A673 (cell line): ENCODE measurements at regions of chr1 and their contacts with region 1.

Region 1: DNA sequence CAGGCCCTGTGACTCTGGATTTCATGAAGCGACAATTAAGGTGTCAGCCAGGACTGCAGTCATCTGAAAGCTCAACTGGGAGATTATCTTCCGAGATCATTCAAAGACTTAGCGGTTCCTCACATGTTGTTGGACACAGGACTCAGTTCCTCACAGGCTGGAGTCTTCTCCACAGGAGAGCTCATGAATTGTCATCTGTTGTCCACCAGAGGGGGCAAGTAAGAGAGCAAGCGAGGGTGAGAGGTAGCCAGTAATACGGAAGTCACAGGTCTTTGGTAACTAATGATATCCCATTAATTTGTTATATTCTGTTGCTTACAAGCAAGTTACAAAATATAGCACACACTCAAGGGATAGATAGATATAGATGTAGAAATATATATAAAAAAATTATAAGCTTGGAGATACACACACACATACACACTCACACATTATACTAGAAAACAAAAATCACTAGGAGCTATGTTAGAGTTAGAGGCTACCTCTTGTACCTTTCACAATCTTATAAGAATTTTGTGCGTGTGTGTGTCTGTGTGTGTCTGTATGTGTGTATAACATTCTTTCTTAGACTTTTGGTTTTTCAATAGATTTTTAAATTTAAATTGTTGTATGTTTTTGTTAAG is 1695.3 kb downstream of the BRINP3 start:
- DNase-seq: peak; percentile 73
- H3K4me3 ChIP-seq: no peak overlapping the region
- H3K27ac ChIP-seq: no peak overlapping the region
- H3K4me1 ChIP-seq: no peaks in the 10 kb centered on the region
- H3K27me3 ChIP-seq: no peaks in the 10 kb centered on the region
- CTCF ChIP-seq: peak; percentile 67

Region 2: DNA sequence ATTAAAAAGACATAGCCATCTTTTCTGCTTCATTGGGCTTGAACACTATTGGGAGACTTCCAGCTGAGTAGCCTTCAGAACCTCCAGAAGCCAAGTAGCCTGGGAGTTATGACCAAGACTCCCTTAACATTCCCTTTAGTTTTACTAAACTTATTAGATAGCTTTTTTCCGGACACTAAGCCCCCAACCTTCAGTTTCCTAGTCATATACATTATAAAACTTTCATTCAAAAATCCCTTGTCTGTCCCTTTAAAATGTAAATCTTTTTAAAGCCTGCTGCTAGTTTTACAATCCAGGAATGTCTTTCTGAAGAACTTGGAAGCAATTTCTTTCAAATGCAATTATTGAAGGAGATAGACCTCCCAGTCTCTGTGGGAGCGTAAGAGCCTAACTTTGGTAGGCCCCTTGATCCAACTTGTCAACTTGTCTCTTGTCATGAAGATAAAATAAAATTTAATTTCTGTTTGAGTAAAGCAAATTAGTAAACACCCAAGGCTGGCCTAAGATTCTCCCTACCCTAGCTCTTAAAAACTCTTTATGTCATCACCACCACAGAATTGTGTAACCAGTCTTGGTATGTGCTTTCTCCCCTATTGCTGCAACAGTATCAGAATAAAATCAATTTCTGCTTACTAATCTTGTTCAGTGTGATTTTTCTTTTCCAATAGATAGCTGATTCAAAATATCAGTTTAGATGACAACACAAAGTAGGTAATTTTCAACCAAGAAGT is 1157.4 kb before region 1 on chr1:
- CTCF ChIA-PET with region 1: no interaction called
- POLR2A ChIA-PET with region 1: no interaction called
- intact Hi-C with region 1: no loop called
- DNase-seq: no peak
- H3K4me3 ChIP-seq: no peak overlapping the region
- H3K27ac ChIP-seq: no peak overlapping the region
- H3K4me1 ChIP-seq: peaks cover 5% of the 10 kb centered on the region
- H3K27me3 ChIP-seq: no peaks in the 10 kb centered on the region
- CTCF ChIP-seq: no peak

Region 3: GRCh38 chr1:188857526-188858087 is 75.3 kb after region 1 on chr1:
- CTCF ChIA-PET with region 1: no interaction called
- POLR2A ChIA-PET with region 1: no interaction called
- intact Hi-C with region 1: no loop called
- DNase-seq: no peak
- H3K4me3 ChIP-seq: no peak overlapping the region
- H3K27ac ChIP-seq: no peak overlapping the region
- H3K4me1 ChIP-seq: no peaks in the 10 kb centered on the region
- H3K27me3 ChIP-seq: no peaks in the 10 kb centered on the region
- CTCF ChIP-seq: no peak

Region 4: DNA sequence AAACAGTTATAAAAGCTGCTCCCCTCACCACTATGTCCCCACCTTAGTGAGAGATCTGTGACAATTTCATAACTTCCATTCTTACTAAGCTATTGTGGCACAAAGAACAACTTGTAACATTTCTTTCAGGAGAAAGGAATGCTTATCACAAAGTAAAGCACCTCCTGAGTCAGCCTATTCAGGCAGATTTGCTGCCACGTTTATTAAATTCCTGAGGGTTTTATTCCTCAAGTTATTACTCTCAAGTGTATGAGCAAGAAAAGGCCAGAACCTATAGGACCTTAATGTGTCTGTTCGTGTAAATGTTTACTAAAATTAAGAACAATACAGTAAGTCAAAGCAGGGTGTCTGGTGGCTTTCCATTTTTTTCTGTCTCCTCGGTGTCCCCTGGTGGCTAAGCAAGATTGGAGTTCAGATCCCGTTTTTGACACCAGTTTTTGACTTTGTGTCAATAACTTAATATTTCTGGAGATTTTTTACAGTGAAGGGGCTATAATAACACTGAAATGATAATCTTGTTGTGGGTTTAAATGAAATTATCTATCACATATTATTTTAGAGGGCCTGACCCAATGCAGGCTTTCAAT is 155.7 kb after region 1 on chr1:
- CTCF ChIA-PET with region 1: no interaction called
- POLR2A ChIA-PET with region 1: no interaction called
- intact Hi-C with region 1: loop called (anchors 5 kb)
- DNase-seq: peak; percentile 49
- H3K4me3 ChIP-seq: no peak overlapping the region
- H3K27ac ChIP-seq: no peak overlapping the region
- H3K4me1 ChIP-seq: no peaks in the 10 kb centered on the region
- H3K27me3 ChIP-seq: no peaks in the 10 kb centered on the region
- CTCF ChIP-seq: peak; percentile 67

Region 5: GRCh38 chr1:189149547-189150375 is 367.4 kb after region 1 on chr1:
- CTCF ChIA-PET with region 1: no interaction called
- POLR2A ChIA-PET with region 1: no interaction called
- intact Hi-C with region 1: no loop called
- DNase-seq: no peak
- H3K4me3 ChIP-seq: no peak overlapping the region
- H3K27ac ChIP-seq: no peak overlapping the region
- H3K4me1 ChIP-seq: no peaks in the 10 kb centered on the region
- H3K27me3 ChIP-seq: no peaks in the 10 kb centered on the region
- CTCF ChIP-seq: no peak